Psoas muscle (tissue), 8 donors: ENCODE measurements at regions of chr5 and their contacts with region 1.

Region 1: DNA sequence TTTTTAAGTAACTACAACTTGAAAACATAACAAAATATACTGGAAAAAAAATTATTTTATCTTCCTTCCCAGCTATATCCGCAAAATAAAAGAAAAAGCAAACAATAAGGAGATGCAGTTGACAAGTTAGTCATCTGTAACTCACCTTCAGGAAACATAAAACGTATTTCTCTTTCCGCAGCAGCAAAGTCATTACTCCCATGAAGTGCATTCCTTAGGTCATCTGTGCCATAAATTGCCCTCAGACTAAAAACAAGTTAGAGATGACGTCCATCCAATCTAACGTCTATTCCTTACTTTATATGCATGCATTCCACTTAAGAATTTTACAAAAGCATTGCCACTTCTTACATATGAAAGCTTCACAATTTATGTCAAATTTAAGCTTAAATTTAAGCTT is 10.9 kb downstream of the NME5 start:
- DNase-seq: no peak
- ATAC-seq: no peak
- H3K4me3 ChIP-seq: no peak overlapping the region
- H3K27ac ChIP-seq: no peak overlapping the region
- H3K4me1 ChIP-seq: no peaks in the 10 kb centered on the region
- H3K27me3 ChIP-seq: no peaks in the 10 kb centered on the region
- CTCF ChIP-seq: no peak

Region 2: DNA sequence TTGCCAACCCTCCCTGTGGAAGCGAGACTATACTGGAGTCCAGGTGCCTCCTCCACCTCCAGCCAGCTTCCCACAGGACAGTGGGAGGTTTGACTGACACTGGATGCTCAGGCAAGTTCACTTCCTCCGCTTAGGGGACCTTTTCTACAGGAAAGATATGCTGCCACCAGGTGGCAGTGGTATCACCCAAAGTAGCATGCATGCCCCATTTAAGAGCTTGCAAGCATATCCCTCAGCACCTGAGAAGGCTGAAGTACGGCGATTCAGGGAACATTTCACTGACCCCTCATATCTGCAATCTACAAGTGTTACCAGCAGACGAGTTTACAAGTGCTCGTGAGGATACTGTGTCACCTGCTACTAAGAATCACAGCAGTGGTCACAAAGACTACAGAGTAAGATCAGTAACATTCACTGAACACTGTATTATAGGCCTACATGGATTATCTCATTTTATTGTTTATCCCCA is 468.0 kb before region 1 on chr5:
- intact Hi-C with region 1: loop called (anchors 2 to 10 kb)
- DNase-seq: peak; percentile 57 to 59
- ATAC-seq: peak; percentile 75 to 92 (median 84)
- H3K4me3 ChIP-seq: no peak overlapping the region
- H3K27ac ChIP-seq: no peak overlapping the region
- H3K4me1 ChIP-seq: peaks cover 4% of the 10 kb centered on the region
- H3K27me3 ChIP-seq: no peaks in the 10 kb centered on the region
- CTCF ChIP-seq: peak; percentile 76

Region 3: GRCh38 chr5:137778772-137779564 is 349.4 kb before region 1 on chr5:
- intact Hi-C with region 1: loop called in 1 of 2 experiments (anchors 5 kb)
- DNase-seq: no peak
- ATAC-seq: peak in 2 of 4 donors; percentile 54 to 76
- H3K4me3 ChIP-seq: no peak overlapping the region
- H3K27ac ChIP-seq: no peak overlapping the region
- H3K4me1 ChIP-seq: peaks cover 8% of the 10 kb centered on the region
- H3K27me3 ChIP-seq: no peaks in the 10 kb centered on the region
- CTCF ChIP-seq: peak; percentile 90

Region 4: GRCh38 chr5:138035605-138036537 is 92.5 kb before region 1 on chr5:
- intact Hi-C with region 1: loop called (anchors 2 to 5 kb)
- DNase-seq: peak; percentile 41 to 57
- ATAC-seq: peak; percentile 38 to 75 (median 64)
- H3K4me3 ChIP-seq: no peak overlapping the region
- H3K27ac ChIP-seq: no peak overlapping the region
- H3K4me1 ChIP-seq: peaks cover 21% of the 10 kb centered on the region
- H3K27me3 ChIP-seq: no peaks in the 10 kb centered on the region
- CTCF ChIP-seq: peak; percentile 86

Region 5: GRCh38 chr5:138077065-138077696 is 51.2 kb before region 1 on chr5:
- intact Hi-C with region 1: loop called (anchors 2 kb)
- DNase-seq: peak in 1 of 2 donors; percentile 47
- ATAC-seq: peak in 3 of 4 donors; percentile 67 to 78 (median 73)
- H3K4me3 ChIP-seq: no peak overlapping the region
- H3K27ac ChIP-seq: no peak overlapping the region
- H3K4me1 ChIP-seq: no peaks in the 10 kb centered on the region
- H3K27me3 ChIP-seq: no peaks in the 10 kb centered on the region
- CTCF ChIP-seq: peak; percentile 93

Region 6: DNA sequence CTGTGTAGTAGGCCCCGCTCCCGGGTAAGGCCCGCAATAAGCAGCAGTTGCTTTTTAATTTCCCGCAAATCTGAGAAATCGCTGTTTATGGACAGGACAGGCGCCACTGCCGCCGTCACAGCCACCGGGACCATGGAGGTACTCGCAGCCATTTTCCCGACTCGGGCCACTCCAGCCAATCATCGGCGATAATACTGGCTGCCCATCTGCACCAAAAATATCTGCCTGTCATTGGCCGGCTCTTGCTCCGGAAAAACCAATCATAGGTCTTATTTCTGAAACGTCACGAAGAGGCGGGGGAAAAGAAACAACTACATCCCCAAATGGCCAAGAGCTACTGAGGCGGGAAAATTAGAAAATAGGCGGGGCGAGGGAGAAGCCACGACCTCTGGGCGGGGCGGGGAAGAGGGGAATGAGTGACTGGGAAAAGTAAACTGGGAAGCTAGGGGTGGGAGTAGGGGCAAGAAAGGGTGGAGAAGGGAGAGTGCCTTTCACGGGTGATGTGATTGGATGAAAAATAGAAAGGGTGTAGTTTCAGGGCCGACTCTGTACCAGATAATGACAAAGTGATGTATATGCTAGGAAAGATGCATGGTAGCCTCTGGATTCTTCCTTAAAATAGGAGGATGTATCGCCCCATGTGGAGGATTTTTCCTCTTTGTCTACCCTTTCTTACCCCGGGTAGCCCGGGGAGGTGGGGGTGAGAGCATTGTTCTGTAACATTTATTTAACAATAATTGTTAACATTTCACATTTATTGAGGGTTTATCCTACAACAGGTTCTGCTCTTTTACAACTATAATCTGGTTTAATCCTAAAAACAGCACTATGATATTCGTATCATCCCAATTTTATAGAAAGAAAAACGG is 85.1 kb after region 1 on chr5 and contains the start of gene CDC23:
- intact Hi-C with region 1: no loop called
- DNase-seq: peak; percentile 89 to 93
- ATAC-seq: peak; percentile 98 to 100 (median 99)
- H3K4me3 ChIP-seq: peak within 1 kb of the TSS; percentile 86
- H3K27ac ChIP-seq: peak within 1 kb of the TSS; percentile 82
- H3K4me1 ChIP-seq: peaks cover 14% of the 10 kb centered on the region
- H3K27me3 ChIP-seq: no peaks in the 10 kb centered on the region
- CTCF ChIP-seq: no peak
- total RNA-seq, gene CDC23: 9.2 to 15.0 (median 13.5) TPM